ENCODE measurements at regions of chr3 and their contacts with region 1.

Region 1: GRCh38 chr3:160686955-160687535 is 10.1 kb downstream of the ARL14 start:
- DNase-seq: peak; percentile 35

Region 2: DNA sequence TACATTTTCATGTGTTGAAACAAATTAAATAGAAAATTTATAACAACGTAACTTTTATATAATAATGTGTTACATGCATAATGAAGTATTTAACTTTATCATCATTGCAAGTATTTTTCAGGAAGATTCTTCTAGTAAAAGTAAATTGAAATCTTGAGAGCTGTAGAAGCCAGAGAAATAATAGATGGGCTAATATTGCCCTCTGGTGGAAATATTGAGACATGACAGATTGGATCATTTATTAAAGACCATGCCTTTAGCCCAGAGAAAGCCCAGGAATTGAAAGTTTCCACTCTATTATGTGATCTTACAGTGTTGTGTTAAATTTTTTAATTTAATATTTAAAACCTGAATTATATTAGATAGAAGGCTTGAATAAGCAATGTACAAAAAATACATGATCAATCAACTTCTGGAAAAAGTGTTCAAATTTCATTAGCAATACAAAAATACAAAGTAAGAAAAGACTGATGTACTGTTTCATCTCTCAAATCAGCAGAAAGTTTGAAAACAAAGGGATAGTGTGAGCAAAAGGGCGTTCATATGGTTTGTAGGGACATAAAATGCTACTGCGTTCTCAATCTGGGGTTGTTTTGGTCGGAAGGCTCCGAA is 737.0 kb after region 1 on chr3:
- in situ Hi-C with region 1: loop called (anchors 25 kb)
- DNase-seq: peak; percentile 61